ENCODE measurements at regions of chr12 and their contacts with region 1.

Region 1: GRCh38 chr12:73072214-73072613 is 800.0 kb downstream of the TRHDE start:
- DNase-seq: no peak
- ATAC-seq: peak; percentile 30
- H3K4me3 ChIP-seq: no peak overlapping the region
- H3K27ac ChIP-seq: no peak overlapping the region
- H3K4me1 ChIP-seq: no peaks in the 10 kb centered on the region
- H3K27me3 ChIP-seq: no peaks in the 10 kb centered on the region
- CTCF ChIP-seq: no peak

Region 2: GRCh38 chr12:73798523-73798922 is 726.3 kb after region 1 on chr12:
- intact Hi-C with region 1: loop called (anchors 10 kb)
- DNase-seq: no peak
- ATAC-seq: no peak
- H3K4me3 ChIP-seq: no peak overlapping the region
- H3K27ac ChIP-seq: no peak overlapping the region
- H3K4me1 ChIP-seq: no peaks in the 10 kb centered on the region
- H3K27me3 ChIP-seq: no peaks in the 10 kb centered on the region
- CTCF ChIP-seq: no peak